Vagina (tissue), 2 donors: ENCODE measurements at regions of chr10 and their contacts with region 1.

Region 1: DNA sequence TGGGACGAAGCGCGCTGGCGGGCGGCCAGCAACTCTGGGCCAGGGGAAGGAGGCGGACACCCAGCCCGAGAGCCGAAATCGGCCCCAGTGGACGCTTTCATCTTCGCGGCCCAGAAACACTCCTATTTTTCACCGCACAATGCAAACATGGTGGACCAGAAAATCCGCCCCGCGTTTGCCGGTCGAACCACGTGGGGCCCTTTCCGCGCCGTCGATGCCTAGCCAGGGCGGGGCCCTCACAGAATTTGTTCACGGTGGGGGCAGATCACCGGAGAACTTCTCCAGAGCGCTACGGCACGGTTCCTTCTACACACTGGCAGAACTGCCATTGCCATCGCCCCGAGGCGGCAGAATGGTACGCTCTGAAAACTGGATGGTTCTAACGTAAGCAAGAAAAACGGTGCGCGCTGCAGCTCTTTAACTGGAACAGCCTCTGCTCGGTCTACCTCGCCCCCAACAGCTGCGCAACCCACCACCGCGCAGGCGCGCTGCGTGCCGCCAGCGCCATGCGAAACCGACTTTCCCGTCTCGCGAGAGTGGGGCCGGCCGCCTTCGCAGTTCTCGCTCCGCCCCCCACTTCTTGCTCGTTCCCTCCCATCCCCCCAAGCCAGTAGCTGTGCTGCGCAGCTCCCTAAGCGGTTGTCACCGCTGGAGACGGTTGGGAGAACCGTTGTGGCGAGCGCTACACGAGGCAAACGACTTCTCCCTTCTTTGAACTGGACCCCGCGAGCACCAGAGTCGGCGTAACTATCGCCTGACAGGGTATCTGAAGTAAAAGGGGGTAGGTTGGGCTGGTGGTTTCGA is at the start of gene HNRNPH3:
- DNase-seq: peak; percentile 97 to 98
- H3K4me3 ChIP-seq: peak within 1 kb of the TSS; percentile 97 to 98
- H3K27ac ChIP-seq: peak within 1 kb of the TSS; percentile 100
- H3K4me1 ChIP-seq: peaks cover 53% of the 10 kb centered on the region
- H3K27me3 ChIP-seq: no peaks in the 10 kb centered on the region
- CTCF ChIP-seq: peak in 1 of 3 experiments; percentile 5
- POLR2A ChIP-seq: peak; percentile 17 to 100
- total RNA-seq, gene HNRNPH3: 90.4 TPM

Region 2: DNA sequence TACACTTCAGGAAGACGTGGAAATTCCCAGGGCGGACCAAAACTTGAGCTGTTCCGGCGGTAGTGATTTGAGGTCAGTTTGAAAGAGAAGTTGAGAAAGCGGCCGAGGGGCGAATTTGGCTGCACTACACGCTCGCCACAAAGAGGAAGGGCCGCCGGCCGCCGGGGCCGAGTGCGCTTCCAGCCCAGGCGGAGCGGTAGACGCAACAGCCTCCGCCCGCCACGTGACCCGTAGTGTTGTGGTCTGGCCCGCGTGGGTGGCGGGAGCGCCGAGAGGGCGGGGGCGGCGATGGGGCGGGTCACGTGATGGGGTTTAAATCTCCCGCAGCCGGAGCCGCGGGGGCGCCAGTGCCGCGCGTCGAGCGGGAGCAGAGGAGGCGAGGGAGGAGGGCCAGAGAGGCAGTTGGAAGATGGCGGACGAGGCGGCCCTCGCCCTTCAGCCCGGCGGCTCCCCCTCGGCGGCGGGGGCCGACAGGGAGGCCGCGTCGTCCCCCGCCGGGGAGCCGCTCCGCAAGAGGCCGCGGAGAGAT is 447.3 kb before region 1 on chr10 and contains the start of gene SIRT1:
- intact Hi-C with region 1: loop called (anchors 2 kb)
- DNase-seq: peak in 1 of 2 donors; percentile 97
- H3K4me3 ChIP-seq: peak within 1 kb of the TSS; percentile 81 to 88
- H3K27ac ChIP-seq: peak within 1 kb of the TSS; percentile 90
- H3K4me1 ChIP-seq: peaks cover 22% of the 10 kb centered on the region
- H3K27me3 ChIP-seq: no peaks in the 10 kb centered on the region
- CTCF ChIP-seq: peak in 1 of 3 experiments; percentile 11
- POLR2A ChIP-seq: peak in 1 of 2 donors; percentile 92
- total RNA-seq, gene SIRT1: 18.9 TPM

Region 3: DNA sequence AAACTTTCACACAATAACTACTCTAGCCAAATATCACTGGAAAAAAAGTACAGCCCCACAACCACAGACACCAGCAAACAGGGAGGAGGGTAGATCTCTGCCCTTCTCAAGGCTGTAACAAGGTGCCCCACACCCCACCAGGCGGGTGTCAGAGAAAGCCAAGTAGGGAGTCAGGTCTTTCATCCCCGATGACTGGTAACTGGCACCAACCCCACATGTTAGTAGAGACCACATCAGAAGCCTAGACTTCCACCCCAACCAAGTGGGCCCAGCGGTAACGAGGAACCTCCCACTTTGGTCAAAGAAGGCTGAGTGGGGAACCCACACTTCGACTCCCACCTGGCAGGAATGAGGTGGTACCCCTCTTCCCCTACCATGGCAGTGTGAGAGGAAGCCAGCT is 91.9 kb after region 1 on chr10:
- intact Hi-C with region 1: no loop called
- DNase-seq: no peak
- H3K4me3 ChIP-seq: no peak overlapping the region
- H3K27ac ChIP-seq: no peak overlapping the region
- H3K4me1 ChIP-seq: no peaks in the 10 kb centered on the region
- H3K27me3 ChIP-seq: no peaks in the 10 kb centered on the region
- CTCF ChIP-seq: no peak
- POLR2A ChIP-seq: no peak

Region 4: DNA sequence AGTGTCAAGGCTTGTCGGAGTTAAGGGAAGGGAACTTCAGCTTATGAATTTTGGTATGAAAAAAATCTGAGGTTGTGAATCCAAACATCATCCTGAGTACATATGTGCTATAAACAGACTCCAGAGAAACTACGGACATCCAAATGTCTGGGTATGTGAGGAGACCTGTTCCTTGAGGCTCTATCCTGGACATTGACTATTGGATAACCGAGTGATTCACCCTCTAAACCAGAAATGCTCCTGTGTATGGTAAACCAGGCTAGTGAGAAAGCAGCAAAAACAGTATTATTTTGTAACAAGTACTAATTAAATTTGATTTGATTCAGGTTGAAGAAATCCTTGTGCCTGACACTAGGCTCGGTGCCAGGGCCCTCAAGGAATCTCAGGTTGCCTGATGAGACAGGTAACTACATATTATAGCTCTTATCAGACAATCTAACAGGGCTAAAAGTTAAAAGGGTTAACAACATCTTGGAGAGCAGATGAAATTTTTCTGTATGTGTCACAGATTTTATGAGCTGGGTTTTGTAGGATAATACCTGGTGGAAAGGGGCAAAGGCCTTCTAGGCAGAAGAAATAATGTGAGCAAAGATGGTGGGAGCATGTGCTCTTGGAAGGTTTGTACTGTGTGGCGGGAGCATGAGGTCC is 485.3 kb after region 1 on chr10:
- intact Hi-C with region 1: loop called (anchors 5 kb)
- DNase-seq: no peak
- H3K4me3 ChIP-seq: no peak overlapping the region
- H3K27ac ChIP-seq: no peak overlapping the region
- H3K4me1 ChIP-seq: no peaks in the 10 kb centered on the region
- H3K27me3 ChIP-seq: no peaks in the 10 kb centered on the region
- CTCF ChIP-seq: no peak
- POLR2A ChIP-seq: no peak

Region 5: GRCh38 chr10:68901104-68901927 is 569.7 kb after region 1 on chr10 and contains the start of gene DDX50:
- intact Hi-C with region 1: loop called (anchors 10 kb)
- DNase-seq: peak; percentile 97 to 99
- H3K4me3 ChIP-seq: peak within 1 kb of the TSS; percentile 84 to 85
- H3K27ac ChIP-seq: peak within 1 kb of the TSS; percentile 99
- H3K4me1 ChIP-seq: peaks cover 44% of the 10 kb centered on the region
- H3K27me3 ChIP-seq: no peaks in the 10 kb centered on the region
- CTCF ChIP-seq: no peak
- POLR2A ChIP-seq: peak; percentile 29 to 57
- total RNA-seq, gene DDX50: 28.7 TPM